Heart left ventricle (tissue), 16 donors: ENCODE measurements at regions of chr1 and their contacts with region 1.

Region 1: GRCh38 chr1:36463803-36464604 is at the start of gene MRPS15:
- DNase-seq: peak; percentile 95 to 97 (median 96)
- ATAC-seq: peak; percentile 96 to 98 (median 97)
- H3K4me3 ChIP-seq: peak within 1 kb of the TSS; percentile 63 to 100 (median 90)
- H3K27ac ChIP-seq: peak within 1 kb of the TSS; percentile 51 to 95 (median 88)
- H3K4me1 ChIP-seq: peaks cover 4 to 25% (median 16%) of the 10 kb centered on the region in 12 donors
- H3K27me3 ChIP-seq: no peaks in the 10 kb centered on the region
- CTCF ChIP-seq: no peak
- POLR2A ChIP-seq: peak in 1 of 2 donors; percentile 67
- total RNA-seq, gene MRPS15: 83.5 to 137 (median 108) TPM

Region 2: DNA sequence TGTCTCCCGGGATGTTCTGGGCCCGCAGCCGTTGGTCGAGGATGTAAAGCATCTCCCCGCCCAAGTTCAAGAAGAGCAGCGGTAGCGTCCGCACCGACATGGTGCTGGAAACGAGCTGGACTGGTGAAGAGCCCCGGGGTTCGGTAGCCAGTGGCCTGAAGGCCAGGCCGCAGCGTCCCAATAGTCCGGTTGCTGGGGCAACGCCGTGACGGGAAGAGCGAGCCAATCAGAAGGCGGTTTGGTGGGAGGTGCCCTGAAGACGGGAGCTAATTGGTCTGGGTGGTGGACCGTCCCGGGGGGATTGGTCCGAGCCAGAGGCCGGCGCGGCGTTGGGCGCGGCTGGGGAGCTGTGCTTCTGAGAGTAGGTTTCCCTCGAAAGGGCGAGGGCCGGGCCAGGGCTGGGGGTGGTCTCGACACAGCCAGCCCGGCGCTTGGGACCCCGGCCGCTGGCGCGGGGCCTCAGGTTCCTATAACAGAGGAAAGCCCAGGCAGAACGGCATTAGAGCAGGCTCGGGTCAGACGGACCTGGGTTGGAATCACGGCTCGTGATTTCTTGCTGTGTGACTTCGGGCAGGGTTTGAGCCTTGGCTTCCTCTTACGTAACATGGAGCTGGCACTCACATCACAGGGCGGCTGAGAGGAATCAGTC is 13.6 kb before region 1 on chr1 and contains the start of gene OSCP1:
- intact Hi-C with region 1: loop called in 1 of 10 experiments (anchors 1 kb)
- DNase-seq: peak; percentile 96 to 98 (median 97)
- ATAC-seq: peak; percentile 98 to 99 (median 99)
- H3K4me3 ChIP-seq: peak within 1 kb of the TSS; percentile 34 to 74 (median 66)
- H3K27ac ChIP-seq: peak within 1 kb of the TSS; percentile 74 to 98 (median 94)
- H3K4me1 ChIP-seq: peaks cover 0 to 27% (median 7%) of the 10 kb centered on the region in 12 donors
- H3K27me3 ChIP-seq: no peaks in the 10 kb centered on the region
- CTCF ChIP-seq: no peak
- POLR2A ChIP-seq: peak; percentile 6 to 93
- total RNA-seq, gene OSCP1: 5.1 to 10.3 (median 6.0) TPM